ENCODE measurements at regions of chr17 and their contacts with region 1.

Region 1: DNA sequence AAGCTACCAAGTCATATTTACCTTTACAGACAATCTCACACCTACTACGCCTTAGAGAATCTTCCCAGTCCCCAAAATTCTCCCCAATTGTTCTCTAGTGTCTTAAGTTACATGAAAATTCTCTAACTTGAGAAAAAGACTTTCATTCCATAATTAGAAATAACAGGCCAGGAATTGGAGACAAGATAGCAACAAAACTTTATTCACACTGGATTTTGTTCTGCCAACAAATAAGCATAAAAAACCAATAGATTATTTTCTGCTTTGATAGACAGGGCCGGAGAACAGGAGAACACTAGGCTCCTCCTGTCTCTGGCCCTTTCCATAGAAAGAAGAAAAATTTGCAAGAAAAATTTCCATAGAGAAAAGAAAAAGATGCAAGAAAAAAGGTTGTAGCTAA is 9.4 kb downstream of the CEP112 start:
- DNase-seq: no peak
- ATAC-seq: no peak
- H3K4me3 ChIP-seq: no peak overlapping the region
- H3K27ac ChIP-seq: no peak overlapping the region
- H3K4me1 ChIP-seq: no peaks in the 10 kb centered on the region
- H3K27me3 ChIP-seq: no peaks in the 10 kb centered on the region

Region 2: DNA sequence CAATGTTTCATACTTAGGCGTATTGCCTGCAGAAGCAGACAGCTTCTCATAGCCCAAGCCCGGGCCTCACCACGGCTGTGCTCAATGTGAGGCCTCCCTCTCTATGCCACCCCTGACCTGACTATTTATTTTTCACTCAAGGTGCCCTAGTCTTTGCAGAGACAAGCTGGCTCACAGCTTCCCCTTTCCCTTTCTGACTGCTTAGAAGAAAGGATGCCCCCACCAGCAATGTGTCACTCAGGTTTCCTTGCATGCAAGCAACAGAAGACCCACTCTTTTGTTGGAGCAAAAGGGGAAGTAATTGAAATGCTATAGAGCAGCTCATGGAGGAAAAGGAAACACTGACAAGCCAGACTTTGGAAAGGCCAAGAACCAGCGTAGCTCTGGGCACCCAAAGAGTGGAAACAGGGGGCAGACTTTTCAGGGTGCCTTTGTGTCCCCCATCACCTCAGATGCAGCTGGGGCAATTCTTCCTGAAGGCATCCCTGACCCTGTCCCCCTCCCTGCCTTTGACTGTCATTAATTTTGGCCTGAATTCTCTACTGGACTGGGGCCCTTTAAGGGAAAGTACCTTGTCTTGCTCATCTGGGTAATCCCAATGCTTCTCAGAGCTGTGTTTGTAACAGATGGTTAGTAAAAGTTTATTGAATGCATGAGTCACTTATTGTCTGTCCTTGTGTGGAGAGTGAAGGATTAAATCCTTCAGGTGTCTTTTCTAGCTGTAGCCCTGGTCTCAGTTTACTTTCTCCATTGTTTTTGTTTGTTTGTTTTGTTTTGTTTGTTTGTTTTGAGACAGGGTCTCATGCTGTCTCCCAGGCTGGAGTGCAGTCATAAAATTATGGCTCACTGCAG is 1027.5 kb before region 1 on chr17:
- intact Hi-C with region 1: loop called in 1 of 2 experiments (anchors 5 kb)
- DNase-seq: no peak
- ATAC-seq: no peak
- H3K4me3 ChIP-seq: no peak overlapping the region
- H3K27ac ChIP-seq: no peak overlapping the region
- H3K4me1 ChIP-seq: no peaks in the 10 kb centered on the region
- H3K27me3 ChIP-seq: no peaks in the 10 kb centered on the region

Region 3: DNA sequence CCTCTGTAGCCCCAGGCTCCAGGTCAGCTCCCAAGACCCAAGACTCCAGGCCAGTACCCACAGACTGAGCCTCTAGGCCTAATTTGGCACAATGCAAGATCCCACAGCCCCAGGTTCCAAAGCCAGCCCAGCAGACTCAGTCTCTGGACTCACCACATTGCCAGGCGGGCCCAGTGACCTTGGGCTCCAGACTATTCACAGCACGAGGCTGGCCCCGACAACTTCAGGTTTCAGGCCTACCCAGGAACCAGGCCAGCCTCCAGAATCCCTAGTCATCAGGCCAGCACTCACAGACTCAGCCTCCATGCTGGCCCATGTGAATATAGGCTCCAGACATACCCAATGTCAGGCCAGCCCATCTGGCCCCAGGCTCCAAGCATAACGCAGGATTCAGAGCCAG is 94.4 kb before region 1 on chr17:
- intact Hi-C with region 1: no loop called
- DNase-seq: no peak
- ATAC-seq: no peak
- H3K4me3 ChIP-seq: no peak overlapping the region
- H3K27ac ChIP-seq: no peak overlapping the region
- H3K4me1 ChIP-seq: no peaks in the 10 kb centered on the region
- H3K27me3 ChIP-seq: no peaks in the 10 kb centered on the region